ENCODE measurements at regions of chr7 and their contacts with region 1.

Region 1: GRCh38 chr7:75762314-75762917 is 9.6 kb downstream of the CCL26 start:
- DNase-seq: no peak
- ATAC-seq: peak; percentile 75 to 95 (median 92)
- H3K4me3 ChIP-seq: no peak overlapping the region
- H3K27ac ChIP-seq: no peak overlapping the region
- H3K4me1 ChIP-seq: peaks cover 0 to 7% (median 0%) of the 10 kb centered on the region in 9 donors
- H3K27me3 ChIP-seq: no peaks in the 10 kb centered on the region
- CTCF ChIP-seq: peak; percentile 67 to 89 (median 79)

Region 2: GRCh38 chr7:75617634-75618234 is 144.7 kb before region 1 on chr7:
- intact Hi-C with region 1: loop called in 1 of 10 experiments (anchors 2 kb)
- DNase-seq: peak; percentile 48 to 63
- ATAC-seq: peak; percentile 55 to 83 (median 76)
- H3K4me3 ChIP-seq: peak overlapping the region in 1 of 10 donors; percentile 8
- H3K27ac ChIP-seq: peak overlapping the region in 5 of 10 donors; percentile 18 to 91 (median 62)
- H3K4me1 ChIP-seq: peaks cover 0 to 72% (median 0%) of the 10 kb centered on the region in 9 donors
- H3K27me3 ChIP-seq: no peaks in the 10 kb centered on the region
- CTCF ChIP-seq: no peak

Region 3: DNA sequence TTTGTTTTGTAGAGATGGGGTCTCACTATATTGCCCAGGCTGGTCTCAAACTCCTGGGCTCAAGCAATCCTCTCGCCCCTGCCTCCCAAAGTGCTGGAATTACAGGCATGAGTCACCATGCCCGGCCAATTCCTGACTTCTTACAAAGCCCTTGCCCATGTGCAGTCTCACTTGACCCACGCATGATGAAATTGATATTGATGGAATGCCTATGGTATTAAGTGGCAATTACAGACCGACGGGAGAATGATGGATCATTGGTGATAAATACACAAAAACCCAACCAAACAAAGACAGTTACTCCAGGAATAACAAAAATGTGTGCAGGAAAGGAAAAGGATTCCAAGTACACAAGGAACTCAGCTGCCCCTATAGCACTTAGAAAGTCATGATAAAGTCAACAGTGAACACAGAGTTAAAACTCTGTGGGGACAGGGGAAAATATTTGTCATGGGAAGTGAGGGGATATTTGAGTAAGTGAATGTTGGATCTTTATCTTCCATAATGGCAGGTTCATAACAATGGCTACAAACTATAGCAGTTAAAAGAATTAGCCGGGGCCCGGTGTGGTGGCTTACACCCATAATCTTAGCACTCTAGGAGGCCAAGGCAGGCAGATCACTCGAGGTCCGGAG is 45.3 kb before region 1 on chr7:
- intact Hi-C with region 1: loop called in 1 of 10 experiments (anchors 5 kb)
- DNase-seq: no peak
- ATAC-seq: no peak
- H3K4me3 ChIP-seq: no peak overlapping the region
- H3K27ac ChIP-seq: no peak overlapping the region
- H3K4me1 ChIP-seq: peaks cover 10 to 36% (median 20%) of the 10 kb centered on the region in 9 donors
- H3K27me3 ChIP-seq: no peaks in the 10 kb centered on the region
- CTCF ChIP-seq: no peak

Region 4: DNA sequence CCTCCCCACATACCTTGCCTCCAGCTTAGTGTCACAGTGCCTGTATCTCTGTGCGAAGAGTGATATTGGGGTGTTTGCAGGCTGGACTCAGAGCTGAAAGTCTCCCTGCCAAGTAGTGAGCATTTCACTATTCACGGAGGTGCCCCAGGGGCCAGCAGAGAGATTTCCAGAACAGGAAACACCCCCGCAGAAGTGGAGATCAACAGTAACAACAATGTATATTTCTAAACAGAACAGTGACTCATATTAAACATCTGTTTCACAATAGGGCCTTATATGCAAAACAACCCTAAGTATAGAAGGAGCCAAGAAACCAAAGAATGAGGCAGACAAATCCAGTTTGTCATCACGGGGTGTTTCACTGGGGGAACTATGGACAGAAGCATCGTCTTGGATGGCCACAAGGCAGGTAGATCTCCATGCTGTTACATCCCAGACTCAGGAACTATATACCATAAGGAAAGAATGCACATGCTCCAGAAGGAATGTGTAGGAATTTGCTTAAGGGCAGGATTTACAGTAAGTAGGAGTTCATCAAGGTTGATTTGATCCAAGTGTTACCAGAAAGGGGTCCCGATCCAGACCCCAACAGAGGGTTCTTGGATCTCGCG is 80.5 kb after region 1 on chr7:
- intact Hi-C with region 1: no loop called
- DNase-seq: peak in 1 of 2 donors; percentile 21
- ATAC-seq: peak in 7 of 8 donors; percentile 12 to 80 (median 68)
- H3K4me3 ChIP-seq: no peak overlapping the region
- H3K27ac ChIP-seq: peak overlapping the region in 4 of 10 donors; percentile 25 to 80 (median 50)
- H3K4me1 ChIP-seq: peaks cover 0 to 19% (median 8%) of the 10 kb centered on the region in 9 donors
- H3K27me3 ChIP-seq: no peaks in the 10 kb centered on the region
- CTCF ChIP-seq: no peak

Region 5: GRCh38 chr7:76122516-76123239 is 360.3 kb after region 1 on chr7:
- intact Hi-C with region 1: no loop called
- DNase-seq: no peak
- ATAC-seq: no peak
- H3K4me3 ChIP-seq: no peak overlapping the region
- H3K27ac ChIP-seq: no peak overlapping the region
- H3K4me1 ChIP-seq: no peaks in the 10 kb centered on the region
- H3K27me3 ChIP-seq: peaks cover 0 to 4% (median 0%) of the 10 kb centered on the region in 7 donors
- CTCF ChIP-seq: no peak

Measured in heart right ventricle (tissue), 16 donors.